Body of pancreas (tissue), 4 donors: ENCODE measurements at regions of chr12 and their contacts with region 1.

Region 1: DNA sequence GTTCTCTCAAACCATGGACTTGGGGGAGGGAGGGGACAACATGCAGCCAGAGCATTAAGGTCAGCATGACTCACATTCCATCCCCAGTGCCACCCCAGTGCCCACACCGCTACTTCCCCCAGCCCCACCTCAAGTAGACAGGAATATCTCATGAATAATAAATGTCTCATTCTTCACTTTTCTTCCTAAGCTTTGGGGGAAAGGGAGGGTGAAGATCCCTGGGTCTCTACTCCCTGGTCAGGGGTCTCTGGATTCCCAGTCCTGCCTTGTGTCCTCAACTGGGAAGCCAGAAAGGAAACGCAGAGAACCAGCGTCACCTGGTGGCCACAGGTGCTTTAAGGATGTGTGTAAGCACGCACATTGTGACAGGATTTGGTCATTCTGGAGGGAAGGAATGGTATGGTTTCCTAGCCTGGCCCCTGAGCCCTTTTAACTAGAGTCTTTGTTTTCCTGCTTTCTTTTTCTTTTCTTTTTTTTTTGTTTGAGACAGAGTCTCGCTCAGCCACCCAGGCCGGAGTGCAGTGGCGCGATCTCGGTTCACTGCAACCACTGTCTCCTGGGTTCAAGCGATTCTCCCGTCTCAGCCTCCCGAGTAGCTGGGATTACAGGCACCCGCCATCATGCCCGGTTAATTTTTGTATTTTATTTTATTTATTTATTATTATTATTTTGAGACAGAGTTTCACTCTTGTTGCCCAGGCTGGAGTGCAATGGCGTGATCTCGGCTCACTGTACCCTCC is 3.4 kb downstream of the GPR84 start:
- DNase-seq: peak; percentile 84 to 93 (median 88)
- ATAC-seq: peak; percentile 45
- H3K4me3 ChIP-seq: no peak overlapping the region
- H3K27ac ChIP-seq: peak overlapping the region in 3 of 4 donors; percentile 76 to 84 (median 81)
- H3K4me1 ChIP-seq: peaks cover 43% of the 10 kb centered on the region
- H3K27me3 ChIP-seq: no peaks in the 10 kb centered on the region
- CTCF ChIP-seq: peak; percentile 59 to 96 (median 91)
- POLR2A ChIP-seq: no peak

Region 2: DNA sequence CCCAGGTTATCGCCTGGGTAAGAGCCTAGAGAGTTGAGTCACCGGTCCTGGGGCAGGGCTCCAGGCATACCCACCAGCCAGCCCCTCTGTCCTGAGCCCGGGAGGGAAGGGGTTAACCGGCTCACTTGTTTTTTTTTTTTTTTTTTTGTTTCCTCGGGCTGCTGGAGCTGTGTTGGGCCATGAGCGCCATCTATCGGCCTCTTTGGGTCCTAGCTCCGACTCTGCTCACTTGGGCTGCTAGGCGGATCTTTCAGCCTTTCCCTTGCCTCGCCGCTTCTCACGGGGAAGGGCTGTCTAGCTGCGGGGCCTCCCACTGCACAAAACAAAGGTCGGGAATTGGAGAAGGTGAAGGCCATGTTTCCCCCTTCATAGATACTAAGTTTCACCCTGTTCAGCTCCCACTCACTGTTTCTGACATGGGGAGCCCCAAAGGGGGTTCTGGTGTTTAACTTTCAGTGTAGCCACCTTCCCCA is 169.3 kb before region 1 on chr12:
- intact Hi-C with region 1: no loop called
- DNase-seq: peak; percentile 85 to 88 (median 87)
- ATAC-seq: peak; percentile 70
- H3K4me3 ChIP-seq: no peak overlapping the region
- H3K27ac ChIP-seq: no peak overlapping the region
- H3K4me1 ChIP-seq: peaks cover 22% of the 10 kb centered on the region
- H3K27me3 ChIP-seq: no peaks in the 10 kb centered on the region
- CTCF ChIP-seq: peak; percentile 50 to 96 (median 78)
- POLR2A ChIP-seq: peak in 1 of 3 donors; percentile 7

Region 3: GRCh38 chr12:54273981-54274380 is 86.9 kb before region 1 on chr12:
- intact Hi-C with region 1: no loop called
- DNase-seq: no peak
- ATAC-seq: no peak
- H3K4me3 ChIP-seq: no peak overlapping the region
- H3K27ac ChIP-seq: no peak overlapping the region
- H3K4me1 ChIP-seq: peaks cover 32% of the 10 kb centered on the region
- H3K27me3 ChIP-seq: no peaks in the 10 kb centered on the region
- CTCF ChIP-seq: no peak
- POLR2A ChIP-seq: no peak

Region 4: GRCh38 chr12:54294152-54294952 is 66.5 kb before region 1 on chr12:
- intact Hi-C with region 1: loop called (anchors 5 kb)
- DNase-seq: peak; percentile 59 to 77 (median 68)
- ATAC-seq: peak; percentile 85
- H3K4me3 ChIP-seq: no peak overlapping the region
- H3K27ac ChIP-seq: no peak overlapping the region
- H3K4me1 ChIP-seq: no peaks in the 10 kb centered on the region
- H3K27me3 ChIP-seq: no peaks in the 10 kb centered on the region
- CTCF ChIP-seq: peak; percentile 46 to 90 (median 75)
- POLR2A ChIP-seq: no peak